ENCODE measurements at regions of chr11 and their contacts with region 1.

Region 1: GRCh38 chr11:128630367-128631230 is 43.2 kb upstream of the ETS1 start:
- DNase-seq: peak; percentile 81 to 89 (median 89)
- H3K4me3 ChIP-seq: peak overlapping the region in 1 of 3 experiments; percentile 42
- H3K4me3 Mint-ChIP-seq: peak overlapping the region; percentile 52 to 80
- H3K27ac ChIP-seq: peak overlapping the region in 1 of 2 donors; percentile 37
- H3K27ac Mint-ChIP-seq: peak overlapping the region in 5 of 7 donors; percentile 26 to 82 (median 70)
- H3K4me1 ChIP-seq: peaks cover 5 to 9% of the 10 kb centered on the region in 2 donors
- H3K4me1 Mint-ChIP-seq: peaks cover 13% of the 10 kb centered on the region
- H3K27me3 ChIP-seq: no peaks in the 10 kb centered on the region
- H3K27me3 Mint-ChIP-seq: peaks cover 0 to 3% (median 2%) of the 10 kb centered on the region in 3 donors
- CTCF ChIP-seq: peak; percentile 86

Region 2: DNA sequence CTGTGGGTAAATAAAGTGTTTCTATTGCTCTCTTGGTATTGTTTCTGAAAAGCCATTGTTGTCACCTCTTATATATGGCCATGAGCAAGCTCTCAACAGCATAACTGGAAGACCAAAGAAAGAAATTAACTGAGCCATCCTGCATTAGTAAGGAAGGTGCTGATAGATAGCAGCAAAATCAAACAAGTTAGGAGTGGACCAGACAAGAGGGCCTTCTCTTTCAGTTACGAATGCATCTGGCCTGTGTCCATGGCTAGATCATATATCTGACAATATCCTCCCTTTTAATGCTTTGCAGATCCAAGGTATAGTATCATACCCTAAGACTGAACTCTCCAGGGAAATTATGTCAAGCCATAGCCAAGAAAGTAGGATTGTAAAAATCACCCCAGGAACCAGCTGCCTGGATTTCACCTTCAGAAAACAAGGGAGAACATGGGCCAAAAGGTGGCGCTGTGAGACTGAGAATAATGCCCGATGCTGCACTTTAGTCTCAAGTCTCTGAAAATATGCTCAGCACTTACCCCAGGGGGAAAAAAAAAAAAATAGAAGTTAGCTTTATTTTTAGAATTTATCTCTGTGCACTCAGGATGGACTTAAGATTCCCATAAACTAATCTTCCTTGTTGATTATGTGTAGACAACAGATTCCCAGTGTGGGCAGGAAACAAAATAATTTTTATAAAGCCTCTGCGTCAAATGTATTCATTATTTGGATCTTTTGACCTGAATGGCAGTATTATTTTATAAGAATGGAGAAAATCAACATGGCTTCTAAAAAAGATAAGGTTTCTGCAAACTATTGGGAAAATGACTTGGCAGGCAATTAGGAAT is 458.3 kb before region 1 on chr11:
- intact Hi-C with region 1: loop called (anchors 10 kb)
- DNase-seq: peak; percentile 52 to 65 (median 64)
- H3K4me3 ChIP-seq: no peak overlapping the region
- H3K4me3 Mint-ChIP-seq: no peak overlapping the region
- H3K27ac ChIP-seq: no peak overlapping the region
- H3K27ac Mint-ChIP-seq: no peak overlapping the region
- H3K4me1 ChIP-seq: no peaks in the 10 kb centered on the region
- H3K4me1 Mint-ChIP-seq: no peaks in the 10 kb centered on the region
- H3K27me3 ChIP-seq: no peaks in the 10 kb centered on the region
- H3K27me3 Mint-ChIP-seq: peaks cover 0 to 1% (median 0%) of the 10 kb centered on the region in 3 donors
- CTCF ChIP-seq: peak; percentile 83

Region 3: DNA sequence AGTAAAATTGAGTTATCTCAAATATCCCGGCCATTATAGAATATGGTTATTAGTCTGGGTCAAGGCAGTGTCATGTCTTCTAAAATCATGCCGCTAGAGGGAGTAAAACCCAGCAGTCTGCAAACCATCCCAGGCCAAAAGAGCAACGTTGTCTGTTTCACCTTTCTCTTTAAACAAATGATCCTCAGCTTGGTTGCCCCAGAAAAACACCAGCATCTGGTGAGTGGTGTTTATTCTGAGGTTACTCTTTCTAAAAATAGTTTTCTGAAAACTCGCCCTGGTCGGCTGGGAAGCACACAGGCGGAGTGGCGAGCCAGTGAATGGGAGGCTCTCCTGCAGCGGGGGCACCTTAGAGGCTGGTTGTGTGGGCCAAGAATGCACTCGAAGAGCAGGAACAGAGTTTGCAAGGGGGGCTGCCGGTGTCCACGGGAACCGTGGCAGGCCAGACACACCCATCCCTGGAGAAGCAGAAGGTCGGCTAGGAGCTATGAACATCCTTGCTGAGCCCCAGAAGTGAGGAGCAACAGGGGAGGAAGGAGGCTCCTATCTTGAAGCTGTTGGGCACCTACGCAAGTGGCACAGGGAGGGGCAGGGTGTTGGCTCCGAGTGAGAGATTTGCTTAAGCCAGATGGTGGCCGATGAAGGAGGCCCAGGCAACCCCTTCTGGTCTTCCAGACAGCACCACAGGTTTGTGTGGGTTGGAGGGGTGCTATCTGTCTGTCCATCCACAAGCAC is 340.3 kb before region 1 on chr11:
- intact Hi-C with region 1: loop called (anchors 5 kb)
- DNase-seq: peak; percentile 52 to 66 (median 61)
- H3K4me3 ChIP-seq: no peak overlapping the region
- H3K4me3 Mint-ChIP-seq: peak overlapping the region; percentile 47 to 74
- H3K27ac ChIP-seq: no peak overlapping the region
- H3K27ac Mint-ChIP-seq: peak overlapping the region in 3 of 7 donors; percentile 5 to 77 (median 54)
- H3K4me1 ChIP-seq: peaks cover 0 to 3% of the 10 kb centered on the region in 2 donors
- H3K4me1 Mint-ChIP-seq: peaks cover 6% of the 10 kb centered on the region
- H3K27me3 ChIP-seq: no peaks in the 10 kb centered on the region
- H3K27me3 Mint-ChIP-seq: peaks cover 0 to 4% (median 2%) of the 10 kb centered on the region in 3 donors
- CTCF ChIP-seq: peak; percentile 84

Region 4: GRCh38 chr11:128472128-128473089 is 158.2 kb before region 1 on chr11:
- intact Hi-C with region 1: no loop called
- DNase-seq: no peak
- H3K4me3 ChIP-seq: no peak overlapping the region
- H3K4me3 Mint-ChIP-seq: no peak overlapping the region
- H3K27ac ChIP-seq: no peak overlapping the region
- H3K27ac Mint-ChIP-seq: peak overlapping the region in 1 of 7 donors; percentile 17
- H3K4me1 ChIP-seq: no peaks in the 10 kb centered on the region
- H3K4me1 Mint-ChIP-seq: peaks cover 6% of the 10 kb centered on the region
- H3K27me3 ChIP-seq: no peaks in the 10 kb centered on the region
- H3K27me3 Mint-ChIP-seq: peaks cover 2% of the 10 kb centered on the region in 3 donors
- CTCF ChIP-seq: no peak

Region 5: DNA sequence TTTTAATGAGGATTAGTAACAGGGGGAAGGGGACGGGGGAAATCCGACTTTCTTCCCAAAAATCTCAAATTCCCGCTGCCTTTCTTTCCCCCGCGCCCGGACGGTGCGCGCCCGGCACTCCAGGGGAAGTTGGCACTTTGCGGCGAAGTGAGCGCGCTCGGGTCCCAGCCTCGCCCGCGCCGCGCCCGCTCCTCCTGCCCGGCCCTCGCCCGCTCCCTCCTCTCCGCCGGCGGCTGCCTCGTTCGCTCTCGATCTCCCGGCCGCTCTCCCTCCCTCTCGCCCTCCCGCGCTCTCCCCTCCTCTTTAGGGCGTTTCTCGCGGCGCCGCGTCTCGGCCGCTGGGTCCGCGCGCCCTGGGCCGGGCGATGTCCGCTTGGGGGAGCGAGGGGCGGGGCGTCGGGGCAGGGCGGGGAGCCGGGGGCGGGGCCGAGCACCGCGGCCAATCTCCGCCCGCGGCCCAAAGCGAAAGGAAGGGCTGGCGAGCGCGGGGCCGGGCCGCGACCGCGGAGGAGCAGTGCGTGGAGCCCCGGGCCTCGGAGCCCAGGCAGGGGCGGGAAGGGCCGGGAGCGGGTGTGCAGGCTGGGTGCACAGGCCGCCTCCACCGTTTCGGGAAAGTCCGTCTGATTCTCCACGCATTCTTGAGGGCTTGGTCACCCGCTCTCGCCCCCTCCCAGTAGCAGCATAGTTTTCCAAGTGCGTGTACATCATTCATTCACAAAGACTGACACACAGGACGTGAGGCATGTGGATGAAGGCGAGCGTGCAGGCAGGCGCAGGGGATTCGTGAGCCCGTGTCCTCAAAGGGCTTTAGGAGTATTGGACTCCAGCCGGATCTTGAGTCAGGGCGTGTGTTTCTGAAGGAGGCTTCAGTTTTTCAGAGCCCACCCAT is 108.3 kb before region 1 on chr11:
- intact Hi-C with region 1: loop called in 1 of 2 experiments (anchors 5 kb)
- DNase-seq: peak; percentile 75 to 82 (median 80)
- H3K4me3 ChIP-seq: peak overlapping the region; percentile 62 to 96 (median 81)
- H3K4me3 Mint-ChIP-seq: peak overlapping the region; percentile 88 to 91
- H3K27ac ChIP-seq: peak overlapping the region; percentile 62 to 91
- H3K27ac Mint-ChIP-seq: peak overlapping the region; percentile 60 to 92 (median 85)
- H3K4me1 ChIP-seq: peaks cover 13 to 18% of the 10 kb centered on the region in 2 donors
- H3K4me1 Mint-ChIP-seq: peaks cover 33% of the 10 kb centered on the region
- H3K27me3 ChIP-seq: peaks cover 0 to 12% of the 10 kb centered on the region in 2 donors
- H3K27me3 Mint-ChIP-seq: peaks cover 13 to 21% (median 15%) of the 10 kb centered on the region in 3 donors
- CTCF ChIP-seq: no peak

Region 6: DNA sequence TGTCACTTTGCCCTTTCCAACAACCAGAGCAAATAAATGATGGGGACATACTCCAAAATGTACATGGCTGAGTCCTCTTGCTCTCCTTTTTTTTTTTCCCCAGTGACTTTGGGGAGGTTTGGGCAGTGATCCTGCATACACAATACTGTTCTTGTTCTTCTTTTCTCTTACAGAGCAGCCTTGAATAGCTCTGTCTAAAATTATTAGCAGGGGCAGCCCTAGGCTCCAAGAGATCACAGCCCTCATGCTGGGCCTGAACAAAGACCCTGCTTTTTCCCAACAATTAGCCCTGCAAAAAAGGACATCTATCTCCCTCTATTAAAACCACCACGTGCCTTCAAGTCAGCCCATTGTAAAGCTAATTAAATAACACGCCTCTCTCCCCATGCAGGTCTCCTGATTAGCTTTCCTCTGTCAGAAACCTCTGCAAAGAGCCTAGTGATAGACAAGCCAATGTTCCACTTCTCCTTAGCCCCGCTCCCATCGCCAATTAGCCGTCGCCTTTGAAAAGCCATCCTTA is 98.0 kb before region 1 on chr11:
- intact Hi-C with region 1: no loop called
- DNase-seq: no peak
- H3K4me3 ChIP-seq: no peak overlapping the region
- H3K4me3 Mint-ChIP-seq: no peak overlapping the region
- H3K27ac ChIP-seq: no peak overlapping the region
- H3K27ac Mint-ChIP-seq: no peak overlapping the region
- H3K4me1 ChIP-seq: peaks cover 5 to 8% of the 10 kb centered on the region in 2 donors
- H3K4me1 Mint-ChIP-seq: peaks cover 7% of the 10 kb centered on the region
- H3K27me3 ChIP-seq: peaks cover 0 to 2% of the 10 kb centered on the region in 2 donors
- H3K27me3 Mint-ChIP-seq: peaks cover 2 to 11% (median 4%) of the 10 kb centered on the region in 3 donors
- CTCF ChIP-seq: no peak

Region 7: GRCh38 chr11:128757235-128757711 is 126.7 kb after region 1 on chr11:
- intact Hi-C with region 1: loop called in 1 of 2 experiments (anchors 10 kb)
- DNase-seq: peak; percentile 84 to 92 (median 92)
- H3K4me3 ChIP-seq: no peak overlapping the region
- H3K4me3 Mint-ChIP-seq: no peak overlapping the region
- H3K27ac ChIP-seq: peak overlapping the region; percentile 12 to 73
- H3K27ac Mint-ChIP-seq: peak overlapping the region; percentile 86 to 96 (median 90)
- H3K4me1 ChIP-seq: peaks cover 21 to 31% of the 10 kb centered on the region in 2 donors
- H3K4me1 Mint-ChIP-seq: peaks cover 46% of the 10 kb centered on the region
- H3K27me3 ChIP-seq: no peaks in the 10 kb centered on the region
- H3K27me3 Mint-ChIP-seq: peaks cover 0 to 2% (median 0%) of the 10 kb centered on the region in 3 donors
- CTCF ChIP-seq: peak; percentile 83

Region 8: GRCh38 chr11:128936606-128937251 is 306.1 kb after region 1 on chr11:
- intact Hi-C with region 1: no loop called
- DNase-seq: no peak
- H3K4me3 ChIP-seq: no peak overlapping the region
- H3K4me3 Mint-ChIP-seq: no peak overlapping the region
- H3K27ac ChIP-seq: no peak overlapping the region
- H3K27ac Mint-ChIP-seq: no peak overlapping the region
- H3K4me1 ChIP-seq: peaks cover 0 to 5% of the 10 kb centered on the region in 2 donors
- H3K4me1 Mint-ChIP-seq: peaks cover 9% of the 10 kb centered on the region
- H3K27me3 ChIP-seq: no peaks in the 10 kb centered on the region
- H3K27me3 Mint-ChIP-seq: peaks cover 2 to 8% (median 6%) of the 10 kb centered on the region in 3 donors
- CTCF ChIP-seq: no peak

Measured in CD14-positive monocyte (primary cell).